WTC11 (cell line): ENCODE measurements at regions of chr1 and their contacts with region 1.

Region 1: GRCh38 chr1:36516372-36517325 is 33.9 kb upstream of the CSF3R start:
- DNase-seq: peak; percentile 67
- ATAC-seq: peak; percentile 81
- H3K4me3 Mint-ChIP-seq: no peak overlapping the region
- H3K27ac Mint-ChIP-seq: no peak overlapping the region
- H3K4me1 Mint-ChIP-seq: peaks cover 18% of the 10 kb centered on the region
- H3K27me3 Mint-ChIP-seq: no peaks in the 10 kb centered on the region; the same call in 1 of the 2 replicates
- CTCF ChIP-seq: peak; percentile 92

Region 2: DNA sequence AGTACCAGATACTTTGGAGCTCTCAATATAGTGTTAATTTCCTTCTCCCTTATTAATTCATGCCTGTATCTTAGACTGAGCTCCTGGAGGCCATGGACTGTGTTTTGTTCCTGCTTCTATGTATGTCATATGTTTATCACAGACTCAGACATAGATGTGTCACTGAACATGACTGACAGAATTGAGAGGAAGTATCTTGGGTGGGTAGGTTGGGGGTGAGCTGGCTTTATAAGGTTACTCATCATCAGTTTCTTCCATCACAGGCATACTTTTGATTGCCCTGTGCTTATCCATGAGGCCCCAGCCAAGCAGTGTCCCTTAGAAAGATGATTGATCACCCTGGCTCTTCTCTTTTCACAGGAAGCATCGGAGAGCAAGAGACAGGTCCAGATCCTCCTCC is 216.1 kb before region 1 on chr1:
- CTCF ChIA-PET with region 1: no interaction called
- POLR2A ChIA-PET with region 1: no interaction called
- DNase-seq: no peak
- ATAC-seq: no peak
- H3K4me3 Mint-ChIP-seq: no peak overlapping the region
- H3K27ac Mint-ChIP-seq: peak overlapping the region; percentile 12; the same call in 1 of the 2 replicates
- H3K4me1 Mint-ChIP-seq: peaks cover 5% of the 10 kb centered on the region
- H3K27me3 Mint-ChIP-seq: no peaks in the 10 kb centered on the region
- CTCF ChIP-seq: no peak

Region 3: DNA sequence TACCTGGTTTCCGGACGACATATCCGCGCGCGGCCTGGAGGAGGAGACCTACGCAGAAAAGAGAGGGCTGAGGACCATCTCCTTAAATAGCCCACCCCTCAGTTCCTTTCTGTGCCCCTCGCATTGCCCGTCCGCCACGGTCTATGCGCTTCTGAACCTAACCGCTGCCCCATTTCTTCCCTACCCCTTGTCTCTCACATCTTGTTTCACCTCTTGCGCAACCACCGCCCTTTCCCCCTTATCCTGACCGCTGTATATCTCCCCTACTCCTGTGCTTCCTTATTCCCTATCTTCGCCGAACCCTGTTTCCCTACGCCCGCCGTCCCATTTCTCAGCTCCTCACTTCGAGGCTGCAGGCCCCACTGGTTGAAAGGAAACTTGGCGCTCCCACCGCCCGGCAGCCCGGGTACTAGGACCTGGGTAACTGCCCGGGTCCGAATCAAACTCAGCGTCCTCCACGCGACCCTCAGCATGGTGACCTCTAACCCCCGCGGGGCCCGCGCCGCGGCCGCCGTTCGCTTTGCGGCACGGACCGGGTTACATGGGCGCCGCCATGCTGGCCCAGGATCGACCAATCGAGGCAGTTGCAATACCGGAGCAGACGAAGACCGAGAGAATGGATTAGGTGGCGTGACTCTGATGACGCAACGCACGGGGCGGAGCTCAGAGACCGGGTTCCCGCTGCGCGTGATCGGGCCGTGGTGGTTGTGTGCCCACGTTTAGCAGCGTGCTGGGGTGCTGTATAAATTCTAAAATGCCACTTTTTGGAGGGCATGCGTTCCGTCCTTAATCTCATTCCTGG is 52.6 kb before region 1 on chr1 and contains the start of gene MRPS15:
- CTCF ChIA-PET with region 1: interaction called, 13 read pairs
- POLR2A ChIA-PET with region 1: no interaction called
- DNase-seq: peak; percentile 93
- ATAC-seq: peak; percentile 86
- H3K4me3 Mint-ChIP-seq: peak within 1 kb of the TSS; percentile 94
- H3K27ac Mint-ChIP-seq: peak within 1 kb of the TSS; percentile 95
- H3K4me1 Mint-ChIP-seq: peaks cover 16% of the 10 kb centered on the region
- H3K27me3 Mint-ChIP-seq: peaks cover 45% of the 10 kb centered on the region
- CTCF ChIP-seq: no peak
- total RNA-seq, gene MRPS15: 100.0 to 113 TPM (median 104 TPM) in 3 replicates

Region 4: GRCh38 chr1:36528361-36529349 is 12.0 kb after region 1 on chr1:
- CTCF ChIA-PET with region 1: interaction called, 14 read pairs
- POLR2A ChIA-PET with region 1: no interaction called
- DNase-seq: peak; percentile 42
- ATAC-seq: peak; percentile 86
- H3K4me3 Mint-ChIP-seq: no peak overlapping the region
- H3K27ac Mint-ChIP-seq: no peak overlapping the region
- H3K4me1 Mint-ChIP-seq: peaks cover 19% of the 10 kb centered on the region
- H3K27me3 Mint-ChIP-seq: peaks cover 4% of the 10 kb centered on the region
- CTCF ChIP-seq: no peak

Region 5: DNA sequence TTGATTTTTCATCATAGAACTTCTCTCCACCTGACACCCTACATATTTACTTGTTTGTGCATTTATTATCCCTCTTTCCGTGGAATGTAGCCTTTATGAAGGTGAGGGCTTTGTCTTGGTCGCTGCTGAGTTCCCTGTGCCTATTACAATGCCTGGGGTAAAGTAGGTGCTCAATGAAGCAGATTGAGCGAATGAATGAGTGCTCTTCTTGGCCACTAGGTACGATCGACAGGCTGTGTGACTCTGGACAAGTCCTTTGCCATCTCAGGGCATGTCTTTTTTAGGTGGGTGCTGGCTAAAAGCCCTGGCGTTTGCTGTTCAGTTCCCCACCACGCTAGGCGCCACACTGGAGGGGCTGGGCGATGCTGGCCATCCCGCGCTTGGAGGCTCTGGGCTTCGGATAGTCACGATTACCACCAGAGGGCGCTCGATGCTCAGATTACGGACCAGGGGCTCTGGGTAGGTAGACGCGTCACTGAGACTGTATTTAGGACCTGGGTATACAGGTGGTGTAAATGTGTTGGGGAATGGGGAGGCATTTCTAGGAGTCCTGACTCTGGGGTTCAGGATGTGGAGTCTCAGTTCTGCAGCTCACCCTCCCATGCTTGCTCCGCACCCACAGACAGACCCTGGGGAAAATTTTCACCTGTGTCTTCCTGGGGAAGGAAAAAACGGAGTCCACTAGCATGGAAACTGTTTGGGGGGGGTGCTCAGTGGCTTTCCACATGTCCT is 37.1 kb after region 1 on chr1:
- CTCF ChIA-PET with region 1: interaction called, 19 read pairs
- POLR2A ChIA-PET with region 1: no interaction called
- DNase-seq: peak; percentile 92
- ATAC-seq: peak; percentile 100
- H3K4me3 Mint-ChIP-seq: no peak overlapping the region
- H3K27ac Mint-ChIP-seq: no peak overlapping the region
- H3K4me1 Mint-ChIP-seq: no peaks in the 10 kb centered on the region
- H3K27me3 Mint-ChIP-seq: peaks cover 31% of the 10 kb centered on the region
- CTCF ChIP-seq: peak; percentile 77

Region 6: GRCh38 chr1:36594023-36594422 is 77.4 kb after region 1 on chr1:
- CTCF ChIA-PET with region 1: interaction called, 15 read pairs
- POLR2A ChIA-PET with region 1: no interaction called
- DNase-seq: no peak
- ATAC-seq: no peak
- H3K4me3 Mint-ChIP-seq: no peak overlapping the region
- H3K27ac Mint-ChIP-seq: no peak overlapping the region
- H3K4me1 Mint-ChIP-seq: peaks cover 19% of the 10 kb centered on the region
- H3K27me3 Mint-ChIP-seq: no peaks in the 10 kb centered on the region; the same call in 1 of the 2 replicates
- CTCF ChIP-seq: no peak